Dendritic cell treated with granulocyte-macrophage colony-stimulating factor and Interleukin-4, amounts not matched to agents 40 ng/mL and 50 ng/mL, for 4 days (primary cell): ENCODE measurements at regions of chr9 and their contacts with region 1.

Region 1: GRCh38 chr9:78707481-78707991 is 410.6 kb downstream of the PSAT1 start:
- H3K4me3 Mint-ChIP-seq: peak overlapping the region; percentile 0
- H3K27ac Mint-ChIP-seq: no peak overlapping the region
- H3K4me1 Mint-ChIP-seq: peaks cover 28% of the 10 kb centered on the region
- H3K27me3 Mint-ChIP-seq: no peaks in the 10 kb centered on the region

Region 2: GRCh38 chr9:78578072-78578471 is 129.5 kb before region 1 on chr9:
- intact Hi-C with region 1: no loop called
- H3K4me3 Mint-ChIP-seq: no peak overlapping the region
- H3K27ac Mint-ChIP-seq: no peak overlapping the region
- H3K4me1 Mint-ChIP-seq: no peaks in the 10 kb centered on the region
- H3K27me3 Mint-ChIP-seq: no peaks in the 10 kb centered on the region

Region 3: GRCh38 chr9:78601957-78602565 is 105.5 kb before region 1 on chr9:
- intact Hi-C with region 1: loop called (anchors 1 kb)
- H3K4me3 Mint-ChIP-seq: no peak overlapping the region
- H3K27ac Mint-ChIP-seq: no peak overlapping the region
- H3K4me1 Mint-ChIP-seq: no peaks in the 10 kb centered on the region
- H3K27me3 Mint-ChIP-seq: no peaks in the 10 kb centered on the region

Region 4: GRCh38 chr9:78644359-78644758 is 63.2 kb before region 1 on chr9:
- intact Hi-C with region 1: no loop called
- H3K4me3 Mint-ChIP-seq: no peak overlapping the region
- H3K27ac Mint-ChIP-seq: no peak overlapping the region
- H3K4me1 Mint-ChIP-seq: no peaks in the 10 kb centered on the region
- H3K27me3 Mint-ChIP-seq: peaks cover 1% of the 10 kb centered on the region

Region 5: DNA sequence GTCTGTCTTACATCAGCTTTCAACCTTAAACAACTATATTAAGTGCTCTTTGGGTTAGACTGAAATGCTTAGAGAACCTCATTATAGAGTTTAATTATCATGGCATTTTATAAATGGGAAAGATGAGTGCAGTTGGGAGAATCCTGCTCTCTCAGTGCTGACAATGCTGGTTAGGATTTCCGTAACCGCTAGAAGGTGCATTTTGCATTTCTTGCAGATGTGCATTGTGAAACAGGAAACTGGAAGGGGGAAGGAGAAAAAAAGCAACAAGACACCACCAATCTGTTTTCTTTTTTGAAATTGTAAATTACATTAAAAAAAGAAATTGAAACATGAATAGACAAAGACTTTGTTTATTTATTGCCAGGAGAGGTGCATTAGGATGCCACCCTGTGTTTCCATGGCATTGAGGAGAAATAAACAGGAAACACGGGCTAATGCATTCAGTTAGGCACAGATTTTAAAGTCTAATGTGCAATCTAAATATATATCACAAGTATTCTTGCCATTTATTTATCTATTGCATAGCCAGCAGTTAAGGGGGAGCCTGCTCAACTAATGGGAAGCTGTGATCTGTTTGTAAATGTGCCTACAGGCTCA is 68.3 kb after region 1 on chr9:
- intact Hi-C with region 1: loop called (anchors 5 kb)
- H3K4me3 Mint-ChIP-seq: no peak overlapping the region
- H3K27ac Mint-ChIP-seq: peak overlapping the region; percentile 20
- H3K4me1 Mint-ChIP-seq: peaks cover 29% of the 10 kb centered on the region
- H3K27me3 Mint-ChIP-seq: no peaks in the 10 kb centered on the region